Endothelial cell of umbilical vein (primary cell): ENCODE measurements at regions of chr5 and their contacts with region 1.

Region 1: GRCh38 chr5:73448463-73449136 is at the start of gene FOXD1:
- DNase-seq: peak; percentile 66
- H3K4me3 ChIP-seq: peak within 1 kb of the TSS in 1 of 3 experiments; percentile 38
- H3K27ac ChIP-seq: no peak within 1 kb of the TSS
- H3K4me1 ChIP-seq: peaks cover 7% of the 10 kb centered on the region
- H3K27me3 ChIP-seq: peaks cover 68 to 88% of the 10 kb centered on the region in 2 experiments
- CTCF ChIP-seq: no peak
- POLR2A ChIP-seq: no peak
- total RNA-seq, gene FOXD1: 0.14 and 0.20 TPM in 2 replicates

Region 2: DNA sequence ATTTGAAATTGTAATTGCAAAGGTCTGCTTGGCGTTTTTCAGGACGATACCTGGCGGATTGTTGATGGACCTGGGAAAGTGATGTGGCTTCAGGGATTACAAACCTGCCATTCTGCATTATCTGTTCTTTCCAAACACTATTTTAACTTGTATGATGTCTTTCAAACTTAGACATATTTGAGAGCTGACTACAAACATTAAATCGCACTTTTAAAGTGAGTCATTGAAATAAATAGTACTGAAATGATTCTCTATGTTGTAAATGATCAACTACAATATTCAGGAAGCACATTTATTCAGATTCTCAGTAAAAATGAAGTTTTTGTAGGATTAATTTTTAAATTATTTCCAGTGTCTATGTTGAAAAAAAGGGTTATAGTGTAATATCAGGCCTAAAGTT is 360.6 kb before region 1 on chr5:
- CTCF ChIA-PET with region 1: interaction called, 23 read pairs
- POLR2A ChIA-PET with region 1: no interaction called
- dilution Hi-C with region 1: no loop called
- intact Hi-C with region 1: loop called (anchors 1 kb)
- DNase-seq: no peak
- H3K4me3 ChIP-seq: no peak overlapping the region
- H3K27ac ChIP-seq: no peak overlapping the region
- H3K4me1 ChIP-seq: no peaks in the 10 kb centered on the region
- H3K27me3 ChIP-seq: no peaks in the 10 kb centered on the region
- CTCF ChIP-seq: no peak
- POLR2A ChIP-seq: no peak

Region 3: DNA sequence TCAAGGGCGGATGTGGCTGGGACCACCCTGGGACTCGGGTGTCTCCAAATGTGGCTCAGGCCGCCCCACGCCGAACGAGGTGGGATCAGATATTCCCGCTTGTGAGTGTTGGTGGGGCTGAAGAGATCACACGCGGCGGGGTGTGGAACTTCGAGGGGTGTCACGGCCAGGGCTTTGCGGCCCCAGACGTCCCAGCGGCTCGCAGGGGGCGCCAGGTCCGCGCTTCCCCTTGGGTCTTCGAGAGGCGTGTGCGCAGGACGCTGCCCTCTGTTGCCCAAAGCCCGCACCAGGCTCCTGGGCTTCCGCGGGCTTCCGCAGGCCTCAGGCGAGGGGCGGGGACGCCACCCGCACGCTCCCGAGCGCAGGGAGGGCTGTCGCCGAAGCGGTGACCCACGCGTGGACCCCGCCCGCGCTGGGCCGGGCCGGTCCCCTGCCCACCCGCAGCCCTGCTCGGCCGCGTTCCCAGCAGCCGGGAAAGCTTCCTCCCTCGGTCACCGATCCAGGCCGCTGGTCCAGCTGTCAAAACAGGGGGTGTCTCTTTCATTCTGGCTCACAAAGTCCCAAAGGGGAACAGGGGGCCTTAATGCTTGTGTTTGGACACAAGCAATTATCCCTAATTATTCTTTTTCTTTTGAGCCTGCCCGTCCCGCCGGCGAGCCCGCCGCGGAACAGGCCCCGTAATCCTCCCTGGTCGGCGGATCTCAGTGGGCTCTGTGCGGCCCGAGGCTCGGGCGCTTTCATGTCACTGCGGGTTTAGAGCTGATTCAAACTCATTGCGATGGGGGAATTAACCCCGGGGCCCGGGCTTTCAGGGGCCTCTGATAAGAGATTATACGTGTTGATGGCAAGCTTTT is 215.0 kb before region 1 on chr5:
- CTCF ChIA-PET with region 1: interaction called, 15 read pairs
- POLR2A ChIA-PET with region 1: no interaction called
- dilution Hi-C with region 1: no loop called
- intact Hi-C with region 1: no loop called
- DNase-seq: peak; percentile 17
- H3K4me3 ChIP-seq: peak overlapping the region in 1 of 3 experiments; percentile 1
- H3K27ac ChIP-seq: no peak overlapping the region
- H3K4me1 ChIP-seq: peaks cover 5% of the 10 kb centered on the region
- H3K27me3 ChIP-seq: peaks cover 67 to 97% of the 10 kb centered on the region in 2 experiments
- CTCF ChIP-seq: peak in 1 of 2 donors; percentile 9
- POLR2A ChIP-seq: no peak

Region 4: GRCh38 chr5:73312146-73312871 is 136.3 kb before region 1 on chr5:
- CTCF ChIA-PET with region 1: interaction called, 36 read pairs
- POLR2A ChIA-PET with region 1: no interaction called
- dilution Hi-C with region 1: no loop called
- intact Hi-C with region 1: no loop called
- DNase-seq: no peak
- H3K4me3 ChIP-seq: no peak overlapping the region
- H3K27ac ChIP-seq: no peak overlapping the region
- H3K4me1 ChIP-seq: no peaks in the 10 kb centered on the region
- H3K27me3 ChIP-seq: peaks cover 70 to 98% of the 10 kb centered on the region in 2 experiments
- CTCF ChIP-seq: peak in 1 of 2 donors; percentile 19
- POLR2A ChIP-seq: no peak

Region 5: DNA sequence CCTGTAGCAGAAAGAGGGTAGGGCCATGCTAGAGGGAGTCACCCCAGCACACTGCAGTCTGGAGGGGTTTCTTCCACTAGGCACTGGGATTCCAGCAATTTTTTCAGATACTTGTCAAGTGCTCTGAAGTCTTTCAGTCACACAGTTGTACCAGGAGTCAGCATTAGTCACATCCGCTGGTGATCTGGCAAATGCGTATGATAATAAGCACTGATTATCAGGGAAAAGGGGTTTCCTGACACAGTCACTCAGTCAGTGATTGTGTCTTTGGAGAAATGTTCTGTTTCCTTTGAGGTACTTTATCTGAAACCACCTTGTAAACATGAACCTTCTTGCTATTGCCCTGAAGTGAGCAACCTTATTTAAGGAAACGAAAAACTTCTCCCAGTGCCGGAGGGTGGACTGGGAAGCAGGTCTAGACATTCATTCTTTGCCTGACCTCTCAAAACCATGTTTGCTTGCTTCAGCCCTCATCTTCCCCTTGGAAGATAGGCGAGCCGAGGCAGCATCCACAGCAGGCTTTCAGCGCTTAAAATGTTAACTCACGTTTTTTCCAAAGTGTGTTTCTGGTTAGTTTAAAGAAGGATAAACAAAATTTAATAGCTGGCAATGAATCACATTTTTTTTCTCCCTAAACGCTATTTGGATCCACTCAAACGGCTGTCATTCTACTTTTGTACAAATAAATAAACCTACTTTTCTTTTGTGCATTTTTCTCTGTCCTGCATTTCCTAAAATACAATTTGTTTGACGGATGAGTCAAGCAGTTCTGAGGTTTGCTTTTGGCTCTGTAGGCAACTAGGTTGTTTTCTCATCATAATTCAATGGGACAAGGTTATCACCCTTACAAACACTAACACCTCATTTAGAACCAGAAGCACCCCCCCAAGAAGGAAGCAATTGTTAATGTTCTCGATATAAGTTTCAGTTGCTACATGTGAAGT is 77.7 kb before region 1 on chr5:
- CTCF ChIA-PET with region 1: interaction called, 3 read pairs
- POLR2A ChIA-PET with region 1: no interaction called
- dilution Hi-C with region 1: no loop called
- intact Hi-C with region 1: loop called (anchors 2 kb)
- DNase-seq: peak; percentile 97
- H3K4me3 ChIP-seq: peak overlapping the region in 1 of 3 experiments; percentile 0
- H3K27ac ChIP-seq: peak overlapping the region; percentile 86
- H3K4me1 ChIP-seq: peaks cover 33% of the 10 kb centered on the region
- H3K27me3 ChIP-seq: no peaks in the 10 kb centered on the region
- CTCF ChIP-seq: no peak
- POLR2A ChIP-seq: peak; percentile 69

Region 6: GRCh38 chr5:73464016-73464745 is 15.6 kb after region 1 on chr5:
- CTCF ChIA-PET with region 1: interaction called, 25 read pairs
- POLR2A ChIA-PET with region 1: no interaction called
- dilution Hi-C with region 1: no loop called
- intact Hi-C with region 1: no loop called
- DNase-seq: peak; percentile 94
- H3K4me3 ChIP-seq: no peak overlapping the region
- H3K27ac ChIP-seq: no peak overlapping the region
- H3K4me1 ChIP-seq: no peaks in the 10 kb centered on the region
- H3K27me3 ChIP-seq: peaks cover 37 to 53% of the 10 kb centered on the region in 2 experiments
- CTCF ChIP-seq: no peak
- POLR2A ChIP-seq: no peak